ENCODE measurements at regions of chr1 and their contacts with region 1.

Region 1: DNA sequence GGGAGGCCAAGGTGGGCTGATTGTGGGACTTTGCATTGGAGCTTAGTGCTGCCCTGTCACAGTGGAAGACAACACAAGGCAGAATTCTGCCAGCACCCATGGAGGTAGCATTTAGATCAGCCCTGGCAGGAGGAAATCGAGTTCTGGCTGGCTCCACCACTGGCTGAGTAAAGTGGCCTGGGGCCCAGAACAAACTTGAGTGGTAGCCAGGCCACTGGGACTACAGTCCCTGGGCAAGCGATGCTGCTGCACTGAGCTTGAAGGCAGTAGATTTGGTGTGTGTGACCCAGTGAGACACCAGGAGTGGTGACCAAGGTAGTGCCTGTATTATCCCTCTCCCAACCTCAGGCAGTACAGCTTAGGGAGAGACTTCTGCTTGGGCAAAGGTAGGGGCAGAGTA is 22.5 kb upstream of the UHMK1 start:
- DNase-seq: no peak
- H3K4me3 ChIP-seq: no peak overlapping the region
- H3K27ac ChIP-seq: no peak overlapping the region
- H3K4me1 ChIP-seq: peaks cover 0 to 8% (median 4%) of the 10 kb centered on the region in 4 experiments; a peak in 4 of 7 replicates
- H3K27me3 ChIP-seq: no peaks in the 10 kb centered on the region
- CTCF ChIP-seq: no peak
- EP300 ChIP-seq: no peak
- POLR2A ChIP-seq: no peak
- RAD21 ChIP-seq: no peak

Region 2: GRCh38 chr1:162487241-162487640 is 12.2 kb after region 1 on chr1:
- CTCF ChIA-PET with region 1: interaction called, 10 read pairs
- POLR2A ChIA-PET with region 1: no interaction called
- DNase-seq: no peak
- H3K4me3 ChIP-seq: no peak overlapping the region
- H3K27ac ChIP-seq: no peak overlapping the region
- H3K4me1 ChIP-seq: no peaks in the 10 kb centered on the region
- H3K27me3 ChIP-seq: no peaks in the 10 kb centered on the region
- CTCF ChIP-seq: no peak
- EP300 ChIP-seq: no peak
- POLR2A ChIP-seq: no peak
- RAD21 ChIP-seq: no peak